Lower lobe of right lung (tissue), 2 donors: ENCODE measurements at regions of chrX and their contacts with region 1.

Region 1: GRCh38 chrX:74382613-74383012 is 38.7 kb upstream of the SLC16A2 start:
- DNase-seq: peak; percentile 63
- ATAC-seq: peak; percentile 96
- H3K4me3 ChIP-seq: no peak overlapping the region
- H3K27ac ChIP-seq: no peak overlapping the region
- H3K4me1 ChIP-seq: no peaks in the 10 kb centered on the region
- H3K27me3 ChIP-seq: no peaks in the 10 kb centered on the region
- CTCF ChIP-seq: peak; percentile 68

Region 2: GRCh38 chrX:74506317-74507115 is 123.9 kb after region 1 on chrX:
- intact Hi-C with region 1: no loop called
- DNase-seq: no peak
- ATAC-seq: no peak
- H3K4me3 ChIP-seq: no peak overlapping the region
- H3K27ac ChIP-seq: no peak overlapping the region
- H3K4me1 ChIP-seq: no peaks in the 10 kb centered on the region
- H3K27me3 ChIP-seq: no peaks in the 10 kb centered on the region
- CTCF ChIP-seq: no peak

Region 3: GRCh38 chrX:74550295-74550802 is 167.7 kb after region 1 on chrX:
- intact Hi-C with region 1: loop called (anchors 10 kb)
- DNase-seq: peak; percentile 89
- ATAC-seq: peak; percentile 95 to 98
- H3K4me3 ChIP-seq: no peak overlapping the region
- H3K27ac ChIP-seq: no peak overlapping the region
- H3K4me1 ChIP-seq: no peaks in the 10 kb centered on the region
- H3K27me3 ChIP-seq: no peaks in the 10 kb centered on the region
- CTCF ChIP-seq: peak; percentile 89